Activated CD4-positive, alpha-beta T cell treated with anti-CD3 and anti-CD28 coated beads for 36 hours (primary cell): ENCODE measurements at regions of chr10 and their contacts with region 1.

Region 1: DNA sequence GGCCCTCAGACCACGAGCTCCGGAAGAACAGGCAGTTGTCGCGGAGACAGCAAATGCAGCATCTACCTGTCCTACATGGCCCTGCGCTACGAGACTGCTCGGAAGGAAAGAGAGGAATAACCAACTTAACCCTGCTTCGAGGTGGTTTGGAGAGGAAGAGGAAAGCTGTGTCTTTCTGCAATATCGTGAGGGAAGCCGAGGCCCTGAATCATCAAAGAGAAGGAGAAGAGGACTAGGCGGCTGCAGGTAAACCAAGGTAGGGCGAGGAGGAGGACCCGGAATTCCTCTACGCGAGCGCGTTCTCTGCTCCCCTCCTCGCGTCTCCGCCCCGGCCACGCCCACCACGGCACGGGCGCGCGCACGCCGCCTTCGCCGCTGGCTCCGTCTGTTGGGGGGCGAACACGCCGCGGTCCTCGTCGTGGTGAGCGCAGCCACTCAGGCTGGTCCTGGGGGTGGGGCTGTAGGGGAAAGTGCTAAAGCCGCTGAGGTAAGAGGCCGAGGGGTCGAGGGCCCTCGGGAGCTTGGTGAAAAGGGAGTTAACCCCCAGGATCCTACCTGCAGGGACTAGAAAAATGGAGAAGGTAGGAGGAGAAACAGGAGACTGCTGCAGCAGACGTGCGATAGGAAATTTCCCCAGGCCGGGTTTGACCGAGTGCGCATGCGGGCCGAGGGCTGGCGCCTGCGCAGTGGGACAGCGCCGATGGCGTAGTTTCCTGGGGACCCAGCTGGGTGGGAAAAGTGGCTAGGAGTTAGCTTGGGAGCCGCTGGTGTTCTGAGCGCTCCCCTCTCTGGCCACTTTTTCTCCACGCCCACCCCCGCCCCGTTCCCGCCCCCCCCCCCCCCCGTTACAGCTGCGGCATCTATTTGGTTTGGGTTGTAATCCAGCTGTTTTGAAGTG is at the starts of genes ANAPC16 and ASCC1:
- DNase-seq: peak; percentile 96
- ATAC-seq: peak; percentile 77
- H3K4me3 Mint-ChIP-seq: peak within 1 kb of the TSS; percentile 91
- H3K27ac Mint-ChIP-seq: peak within 1 kb of the TSS; percentile 97
- H3K4me1 Mint-ChIP-seq: peaks cover 48% of the 10 kb centered on the region
- H3K27me3 Mint-ChIP-seq: no peaks in the 10 kb centered on the region
- total RNA-seq, gene ANAPC16: 90.2 to 123 TPM
- total RNA-seq, gene ASCC1: 67.8 to 68.9 TPM

Region 2: GRCh38 chr10:71771821-71772617 is 443.9 kb before region 1 on chr10:
- CTCF ChIA-PET with region 1: no interaction called
- POLR2A ChIA-PET with region 1: no interaction called
- intact Hi-C with region 1: loop called in 1 of 2 experiments (anchors 5 kb)
- DNase-seq: peak; percentile 66
- ATAC-seq: no peak
- H3K4me3 Mint-ChIP-seq: peak overlapping the region; percentile 92
- H3K27ac Mint-ChIP-seq: peak overlapping the region; percentile 97
- H3K4me1 Mint-ChIP-seq: peaks cover 72% of the 10 kb centered on the region
- H3K27me3 Mint-ChIP-seq: no peaks in the 10 kb centered on the region

Region 3: GRCh38 chr10:72088889-72089575 is 126.9 kb before region 1 on chr10:
- CTCF ChIA-PET with region 1: interaction called, 5 read pairs
- POLR2A ChIA-PET with region 1: interaction called, 3 read pairs
- intact Hi-C with region 1: loop called in 1 of 2 experiments (anchors 5 kb)
- DNase-seq: peak; percentile 79
- ATAC-seq: peak; percentile 50
- H3K4me3 Mint-ChIP-seq: peak overlapping the region; percentile 98
- H3K27ac Mint-ChIP-seq: peak overlapping the region; percentile 100
- H3K4me1 Mint-ChIP-seq: peaks cover 57% of the 10 kb centered on the region
- H3K27me3 Mint-ChIP-seq: no peaks in the 10 kb centered on the region

Region 4: DNA sequence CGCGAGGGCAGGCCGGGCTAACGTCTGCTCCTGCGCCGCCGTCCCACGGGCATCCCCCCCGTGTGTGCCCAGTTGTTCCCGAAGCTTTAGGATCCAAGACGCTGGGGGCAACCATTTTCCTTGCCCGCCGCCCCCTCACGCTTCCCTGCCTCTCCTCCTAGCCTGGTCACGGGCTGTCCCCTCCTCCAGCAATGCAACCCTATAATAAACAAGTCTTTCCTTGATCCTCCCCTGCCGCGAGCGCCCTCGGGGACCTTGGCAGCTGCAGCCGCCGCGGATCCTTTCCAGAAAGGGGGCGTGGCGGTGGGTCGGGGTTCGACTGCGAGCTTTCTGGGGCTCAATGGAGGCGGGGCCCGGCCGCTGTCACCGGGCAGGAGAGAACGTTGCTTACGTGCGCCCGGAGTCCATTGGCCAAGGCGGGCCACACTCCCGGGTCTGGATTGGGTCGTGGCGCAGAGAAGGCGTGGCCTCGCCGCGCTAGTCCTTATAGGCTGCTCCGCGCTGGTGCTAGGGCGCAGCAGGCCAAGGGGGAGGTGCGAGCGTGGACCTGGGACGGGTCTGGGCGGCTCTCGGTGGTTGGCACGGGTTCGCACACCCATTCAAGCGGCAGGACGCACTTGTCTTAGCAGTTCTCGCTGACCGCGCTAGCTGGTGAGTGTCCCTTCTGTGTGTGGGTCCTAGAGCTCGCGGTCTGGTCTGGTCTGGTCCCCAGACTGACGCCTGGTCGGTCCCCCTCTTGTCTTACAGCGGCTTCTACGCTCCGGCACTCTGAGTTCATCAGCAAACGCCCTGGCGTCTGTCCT is 57.7 kb after region 1 on chr10 and contains the start of gene DDIT4:
- CTCF ChIA-PET with region 1: interaction called, 9 read pairs
- POLR2A ChIA-PET with region 1: interaction called, 5 read pairs
- intact Hi-C with region 1: loop called in 1 of 2 experiments (anchors 1 kb)
- DNase-seq: peak; percentile 100
- ATAC-seq: peak; percentile 84
- H3K4me3 Mint-ChIP-seq: peak within 1 kb of the TSS; percentile 95
- H3K27ac Mint-ChIP-seq: peak within 1 kb of the TSS; percentile 99
- H3K4me1 Mint-ChIP-seq: peaks cover 44% of the 10 kb centered on the region
- H3K27me3 Mint-ChIP-seq: no peaks in the 10 kb centered on the region
- total RNA-seq, gene DDIT4: 750 to 1,039 TPM

Region 5: DNA sequence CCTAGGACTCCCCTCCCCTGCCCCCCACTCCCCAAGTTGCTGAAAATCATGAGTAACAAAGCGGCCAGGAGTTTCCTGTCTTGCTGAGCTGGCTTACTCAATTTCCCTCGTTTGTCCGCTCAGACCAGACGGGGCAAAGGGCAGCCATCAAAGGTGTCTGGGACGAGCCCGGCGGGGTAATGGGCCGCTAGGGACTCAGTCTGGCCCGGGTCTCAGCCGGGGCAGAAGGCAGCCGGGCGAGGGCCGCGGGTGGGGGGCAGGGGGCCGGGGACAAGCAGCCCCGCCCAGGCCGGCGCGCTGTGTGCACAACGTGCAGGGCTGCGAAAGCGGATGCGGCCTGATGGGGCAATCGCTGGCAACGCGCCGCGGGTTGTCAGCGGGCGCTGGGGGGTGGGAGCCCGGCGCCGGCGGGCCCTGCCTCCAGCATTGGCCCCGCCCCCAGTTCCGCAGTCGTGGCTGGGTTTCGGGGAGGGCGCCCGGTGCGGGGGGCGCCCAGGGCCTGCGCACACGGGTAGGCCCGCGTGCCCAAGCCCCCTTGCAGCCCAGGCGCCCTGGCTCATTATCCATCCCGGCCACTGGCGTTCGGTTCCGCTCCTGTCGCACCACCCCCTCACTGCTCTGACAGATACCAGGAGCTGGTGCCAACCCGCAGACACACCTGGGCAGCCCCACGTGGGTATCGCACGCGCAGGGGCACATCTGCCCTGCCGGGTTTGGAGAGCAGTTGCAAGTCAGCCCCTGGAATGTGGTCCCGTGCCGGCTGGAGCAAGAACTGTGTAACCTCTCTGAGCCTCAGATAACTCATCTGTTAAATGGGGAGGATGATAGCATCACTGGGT is 103.7 kb after region 1 on chr10:
- CTCF ChIA-PET with region 1: interaction called, 6 read pairs
- POLR2A ChIA-PET with region 1: interaction called, 6 read pairs
- intact Hi-C with region 1: loop called (anchors 1 to 5 kb)
- DNase-seq: peak; percentile 95
- ATAC-seq: peak; percentile 48
- H3K4me3 Mint-ChIP-seq: peak overlapping the region; percentile 86
- H3K27ac Mint-ChIP-seq: peak overlapping the region; percentile 100
- H3K4me1 Mint-ChIP-seq: peaks cover 84% of the 10 kb centered on the region
- H3K27me3 Mint-ChIP-seq: no peaks in the 10 kb centered on the region

Region 6: DNA sequence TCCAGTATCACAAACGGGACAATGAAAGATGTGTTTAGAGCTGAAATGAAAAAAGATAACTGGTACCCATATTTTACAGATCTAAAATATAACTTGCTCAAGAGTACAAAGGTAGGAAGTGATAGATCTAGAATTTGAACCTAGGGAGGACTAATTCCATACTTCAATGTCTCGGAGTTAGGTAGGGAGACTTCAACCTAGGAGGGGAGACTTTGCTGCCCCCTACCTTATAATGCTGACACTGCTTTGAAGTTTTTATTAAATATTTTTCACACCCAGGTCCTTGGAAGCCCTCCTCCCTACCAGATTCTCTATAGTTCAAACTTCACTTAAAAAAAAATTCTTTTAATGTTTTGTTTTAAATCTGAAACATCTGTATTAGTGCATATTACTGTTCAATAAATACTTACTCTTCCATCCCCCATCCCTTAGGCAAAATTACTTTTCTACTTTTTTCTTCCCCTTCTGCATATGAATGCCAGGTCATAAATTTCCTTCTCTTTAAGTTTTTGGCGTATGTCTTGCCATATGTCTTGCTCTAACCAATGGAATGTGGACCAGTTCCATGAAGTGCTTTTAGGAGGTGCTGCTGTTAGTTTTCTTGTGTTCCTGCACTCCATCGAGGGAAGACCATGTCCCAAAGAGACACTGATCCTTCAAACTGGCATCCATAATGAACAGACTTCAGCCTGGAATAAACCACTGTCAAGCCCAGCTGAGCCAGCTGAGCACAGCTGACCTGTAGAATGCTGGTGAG is 352.2 kb after region 1 on chr10:
- CTCF ChIA-PET with region 1: no interaction called
- POLR2A ChIA-PET with region 1: no interaction called
- intact Hi-C with region 1: loop called in 1 of 2 experiments (anchors 5 kb)
- DNase-seq: no peak
- ATAC-seq: no peak
- H3K4me3 Mint-ChIP-seq: no peak overlapping the region
- H3K27ac Mint-ChIP-seq: no peak overlapping the region
- H3K4me1 Mint-ChIP-seq: peaks cover 17% of the 10 kb centered on the region
- H3K27me3 Mint-ChIP-seq: no peaks in the 10 kb centered on the region

Region 7: GRCh38 chr10:73246783-73247508 is 1031.0 kb after region 1 on chr10 and contains the start of gene DNAJC9:
- CTCF ChIA-PET with region 1: no interaction called
- POLR2A ChIA-PET with region 1: no interaction called
- intact Hi-C with region 1: loop called in 1 of 2 experiments (anchors 5 kb)
- DNase-seq: peak; percentile 99
- ATAC-seq: peak; percentile 94
- H3K4me3 Mint-ChIP-seq: peak within 1 kb of the TSS; percentile 99
- H3K27ac Mint-ChIP-seq: peak within 1 kb of the TSS; percentile 97
- H3K4me1 Mint-ChIP-seq: peaks cover 58% of the 10 kb centered on the region
- H3K27me3 Mint-ChIP-seq: no peaks in the 10 kb centered on the region
- total RNA-seq, gene DNAJC9: 36.9 to 45.4 TPM